ENCODE measurements at regions of chr12 and their contacts with region 1.

Region 1: DNA sequence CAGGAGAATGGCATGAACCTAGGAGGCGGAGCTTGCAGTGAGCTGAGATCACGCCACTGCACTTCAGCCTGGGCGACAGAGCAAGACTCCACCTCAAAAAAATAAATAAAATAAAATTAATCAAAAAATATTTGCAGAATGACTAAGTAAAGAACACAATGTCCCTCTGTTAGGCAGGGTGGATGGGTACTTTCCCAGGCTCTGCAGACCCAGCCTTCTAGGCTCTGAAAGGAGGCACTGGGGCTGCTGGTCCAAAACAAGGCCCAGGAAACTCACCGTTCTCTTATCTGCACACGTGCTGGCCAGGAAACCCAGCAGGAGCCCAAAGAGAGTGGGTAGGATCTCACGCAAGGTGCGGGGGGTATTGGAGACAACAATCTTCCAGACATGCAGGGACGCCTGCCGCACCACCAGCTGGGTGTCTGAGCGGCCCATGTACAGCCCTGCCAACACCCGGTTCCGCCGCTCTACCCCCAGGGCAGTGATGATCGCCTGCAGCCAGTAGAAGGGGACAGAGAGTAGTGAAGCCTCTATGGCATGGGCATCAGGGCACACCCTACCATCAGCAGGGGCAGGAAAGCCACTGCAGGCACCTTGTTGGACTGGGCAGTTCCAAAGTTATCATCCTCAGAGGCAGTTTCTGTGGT is 25.8 kb upstream of the RAB35 start:
- DNase-seq: peak; percentile 46
- ATAC-seq: 0 out of 2 replicates have a peak, but pooled peaks have one; percentile 9
- H3K4me3 ChIP-seq: no peak overlapping the region
- H3K27ac ChIP-seq: no peak overlapping the region
- H3K4me1 ChIP-seq: peaks cover 11% of the 10 kb centered on the region
- H3K27me3 ChIP-seq: no peaks in the 10 kb centered on the region
- CTCF ChIP-seq: no peak
- POLR2A ChIP-seq: no peak
- RAD21 ChIP-seq: no peak

Region 2: GRCh38 chr12:120175062-120175461 is 32.7 kb after region 1 on chr12:
- CTCF ChIA-PET with region 1: no interaction called
- POLR2A ChIA-PET with region 1: no interaction called
- dilution Hi-C with region 1: no loop called
- in situ Hi-C with region 1: loop called (anchors 5 kb)
- intact Hi-C with region 1: loop called (anchors 5 kb)
- DNase-seq: no peak
- ATAC-seq: no peak
- H3K4me3 ChIP-seq: no peak overlapping the region
- H3K27ac ChIP-seq: no peak overlapping the region
- H3K4me1 ChIP-seq: no peaks in the 10 kb centered on the region
- H3K27me3 ChIP-seq: no peaks in the 10 kb centered on the region
- CTCF ChIP-seq: no peak
- POLR2A ChIP-seq: no peak
- RAD21 ChIP-seq: no peak

Region 3: DNA sequence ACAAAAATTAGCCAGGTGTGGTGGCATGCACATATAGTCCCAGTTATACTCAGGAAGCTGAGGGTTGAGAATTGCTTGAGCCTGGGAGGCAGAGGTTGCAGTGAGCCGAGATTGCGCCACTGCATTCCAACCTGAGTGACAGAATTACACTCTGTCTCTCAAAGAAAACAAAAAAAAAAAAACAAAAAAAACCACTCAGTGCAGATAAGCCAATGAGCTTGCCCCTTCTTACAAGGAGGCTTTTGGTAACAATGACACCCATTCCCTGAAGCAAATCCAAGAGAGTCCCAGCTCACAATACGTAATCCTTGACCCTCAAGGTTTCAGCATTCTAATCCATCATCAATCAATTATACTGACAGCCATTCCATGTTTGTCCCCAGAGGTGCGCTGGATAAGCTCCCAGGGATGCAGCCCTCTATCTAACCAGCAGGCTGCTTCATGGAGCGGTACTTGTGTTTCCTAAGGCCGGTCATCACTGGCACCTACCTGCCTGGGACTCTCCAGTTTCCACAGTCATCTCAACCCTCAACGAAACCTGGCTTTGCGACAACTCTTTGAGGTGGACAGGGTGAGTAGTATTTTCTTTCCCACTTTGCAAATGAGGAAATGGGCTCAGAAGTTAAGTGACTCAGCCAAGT is 39.8 kb after region 1 on chr12:
- CTCF ChIA-PET with region 1: no interaction called
- POLR2A ChIA-PET with region 1: no interaction called
- dilution Hi-C with region 1: no loop called
- in situ Hi-C with region 1: loop called (anchors 5 kb)
- intact Hi-C with region 1: loop called (anchors 5 kb)
- DNase-seq: peak; percentile 74
- ATAC-seq: peak; percentile 58
- H3K4me3 ChIP-seq: no peak overlapping the region
- H3K27ac ChIP-seq: peak overlapping the region; percentile 32; the same call in 1 of the 2 replicates
- H3K4me1 ChIP-seq: peaks cover 8% of the 10 kb centered on the region
- H3K27me3 ChIP-seq: no peaks in the 10 kb centered on the region
- CTCF ChIP-seq: no peak
- POLR2A ChIP-seq: no peak
- RAD21 ChIP-seq: no peak

Region 4: DNA sequence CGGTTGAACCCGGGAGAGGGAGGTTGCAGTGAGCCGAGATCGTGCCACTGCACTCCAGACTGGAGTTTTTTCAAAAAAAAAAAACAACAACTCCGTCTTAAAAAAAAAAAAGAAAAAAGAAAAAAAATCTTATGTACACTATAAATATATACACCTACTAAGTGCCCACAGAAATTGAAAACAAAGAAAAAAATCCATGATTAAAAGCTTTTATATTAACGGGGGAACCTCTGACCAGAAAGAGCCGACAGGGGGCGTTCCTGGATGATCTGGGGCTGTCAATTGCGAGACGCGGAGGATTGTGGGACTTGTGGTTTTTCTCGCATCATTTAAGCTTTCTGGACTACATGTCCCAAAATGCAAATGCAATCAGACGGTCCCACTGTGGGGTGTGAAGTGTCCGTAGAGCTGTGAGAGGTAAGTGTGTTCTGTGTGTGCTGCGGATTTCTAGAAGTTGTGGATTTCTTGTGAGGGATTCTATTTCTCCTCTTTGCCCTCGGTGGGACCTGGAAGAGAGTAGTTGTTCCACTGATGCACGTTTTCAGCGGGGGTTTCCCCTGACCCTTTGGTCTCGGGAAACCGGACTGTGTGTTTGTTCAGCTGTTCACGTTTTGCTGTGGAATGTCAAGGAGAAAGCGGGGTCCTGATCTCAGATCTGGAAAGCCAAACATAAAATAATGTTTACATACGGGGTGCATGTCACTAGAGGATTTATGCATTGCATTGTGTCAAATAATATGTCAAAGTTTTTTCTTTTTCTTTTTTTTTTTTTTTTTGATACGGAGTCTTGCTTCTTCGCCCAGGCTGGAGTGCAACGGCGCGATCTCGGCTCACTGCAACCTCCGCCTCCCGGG is 159.8 kb after region 1 on chr12 and contains the start of gene SIRT4:
- CTCF ChIA-PET with region 1: interaction called, 10 read pairs
- POLR2A ChIA-PET with region 1: no interaction called
- dilution Hi-C with region 1: no loop called
- in situ Hi-C with region 1: no loop called
- intact Hi-C with region 1: no loop called
- DNase-seq: peak; percentile 94
- ATAC-seq: peak; percentile 99
- H3K4me3 ChIP-seq: peak within 1 kb of the TSS; percentile 61
- H3K27ac ChIP-seq: peak within 1 kb of the TSS; percentile 53
- H3K4me1 ChIP-seq: no peaks in the 10 kb centered on the region; the same call in 1 of the 2 replicates
- H3K27me3 ChIP-seq: no peaks in the 10 kb centered on the region
- CTCF ChIP-seq: peak; percentile 94
- POLR2A ChIP-seq: no peak
- RAD21 ChIP-seq: peak; percentile 24
- total RNA-seq, gene SIRT4: 0.83 and 2.0 TPM in 2 replicates